Upper lobe of right lung (tissue), 1 donor: ENCODE measurements at regions of chr7 and their contacts with region 1.

Region 1: DNA sequence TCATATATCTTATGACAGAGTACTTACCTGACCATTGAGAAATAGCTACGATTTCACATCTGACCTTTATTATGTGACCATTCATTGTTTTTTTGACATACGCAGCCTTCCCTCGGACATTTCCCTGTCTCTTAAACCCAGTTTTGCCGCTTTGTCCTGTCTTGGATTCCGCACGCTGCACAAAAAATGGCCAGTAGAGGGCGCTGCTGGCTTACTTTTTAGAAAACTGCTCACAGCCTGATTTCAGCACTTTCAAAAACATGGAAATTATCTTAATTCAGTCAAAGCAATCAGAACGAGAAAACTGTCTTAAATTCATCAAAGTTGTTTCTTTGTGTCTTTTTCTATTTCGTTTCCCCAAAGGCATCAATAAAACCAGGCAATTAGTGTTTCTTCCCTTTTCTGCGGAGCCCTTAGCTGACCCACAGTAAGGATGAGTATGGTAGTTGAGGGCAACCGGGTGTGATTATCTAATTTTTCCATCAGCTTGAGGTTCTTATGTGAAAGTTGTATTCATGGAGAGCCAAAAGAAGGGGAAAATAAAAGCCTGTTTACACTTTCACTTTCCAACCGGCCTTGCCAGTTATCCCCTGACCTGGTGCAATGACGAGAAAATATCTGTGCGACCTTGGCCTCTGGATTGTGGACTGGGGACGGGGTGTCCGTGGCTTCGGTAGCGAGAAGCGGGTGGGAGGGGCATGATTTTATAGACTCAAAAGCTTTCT is 144.4 kb downstream of the DYNC1I1 start:
- DNase-seq: peak; percentile 81
- ATAC-seq: peak; percentile 76
- H3K4me3 ChIP-seq: peak overlapping the region; percentile 33
- H3K27ac ChIP-seq: no peak overlapping the region
- H3K4me1 ChIP-seq: no peaks in the 10 kb centered on the region
- H3K27me3 ChIP-seq: no peaks in the 10 kb centered on the region
- CTCF ChIP-seq: peak; percentile 96

Region 2: DNA sequence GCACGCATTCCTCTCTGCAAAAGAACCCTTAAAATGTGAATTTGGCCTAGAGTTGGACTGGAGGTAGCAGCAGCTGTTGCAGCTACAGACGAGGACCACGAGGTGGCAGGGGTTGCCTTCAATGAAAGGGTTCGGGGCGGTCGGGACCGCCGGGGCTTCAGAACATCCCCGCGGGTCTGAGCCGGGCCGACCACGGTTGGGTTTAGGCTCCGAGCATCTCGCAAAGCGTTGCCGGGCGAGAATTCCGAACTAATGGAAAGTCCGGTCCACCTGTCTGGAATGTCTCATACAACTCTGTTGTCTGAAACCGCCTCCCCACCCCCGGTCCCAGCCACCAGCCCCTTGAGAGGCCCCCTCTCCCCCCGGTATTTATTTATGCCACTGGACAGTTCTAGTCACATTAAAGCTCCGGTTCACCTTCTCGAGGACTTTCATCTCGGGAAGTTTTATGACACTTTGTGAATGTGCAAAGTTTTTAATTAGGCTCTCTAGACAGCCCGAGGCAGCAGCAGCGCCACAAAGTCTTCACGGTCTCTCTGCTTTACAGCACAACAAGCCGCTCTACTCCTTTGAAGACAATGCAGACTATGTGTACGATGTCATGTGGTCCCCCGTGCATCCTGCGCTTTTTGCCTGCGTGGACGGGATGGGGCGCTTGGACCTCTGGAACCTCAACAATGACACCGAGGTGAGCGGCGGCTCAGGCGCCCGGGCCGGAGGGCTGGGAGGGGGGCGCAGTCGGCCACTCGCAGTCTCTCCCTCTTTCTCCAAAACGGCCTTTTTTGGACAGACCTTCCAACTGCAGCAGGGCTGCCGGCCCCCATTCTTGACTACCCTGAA is 159.0 kb after region 1 on chr7:
- intact Hi-C with region 1: no loop called
- DNase-seq: peak; percentile 73
- ATAC-seq: peak; percentile 87
- H3K4me3 ChIP-seq: peak overlapping the region; percentile 47
- H3K27ac ChIP-seq: no peak overlapping the region
- H3K4me1 ChIP-seq: peaks cover 7% of the 10 kb centered on the region
- H3K27me3 ChIP-seq: peaks cover 24% of the 10 kb centered on the region
- CTCF ChIP-seq: peak; percentile 78

Region 3: GRCh38 chr7:97064967-97065587 is 1148.3 kb after region 1 on chr7:
- intact Hi-C with region 1: loop called (anchors 10 kb)
- DNase-seq: no peak
- ATAC-seq: peak; percentile 79
- H3K4me3 ChIP-seq: no peak overlapping the region
- H3K27ac ChIP-seq: no peak overlapping the region
- H3K4me1 ChIP-seq: no peaks in the 10 kb centered on the region
- H3K27me3 ChIP-seq: no peaks in the 10 kb centered on the region
- CTCF ChIP-seq: peak; percentile 74